Activated CD4-positive, alpha-beta memory T cell treated with anti-CD3 and anti-CD28 coated beads for 36 hours (primary cell): ENCODE measurements at regions of chr1 and their contacts with region 1.

Region 1: DNA sequence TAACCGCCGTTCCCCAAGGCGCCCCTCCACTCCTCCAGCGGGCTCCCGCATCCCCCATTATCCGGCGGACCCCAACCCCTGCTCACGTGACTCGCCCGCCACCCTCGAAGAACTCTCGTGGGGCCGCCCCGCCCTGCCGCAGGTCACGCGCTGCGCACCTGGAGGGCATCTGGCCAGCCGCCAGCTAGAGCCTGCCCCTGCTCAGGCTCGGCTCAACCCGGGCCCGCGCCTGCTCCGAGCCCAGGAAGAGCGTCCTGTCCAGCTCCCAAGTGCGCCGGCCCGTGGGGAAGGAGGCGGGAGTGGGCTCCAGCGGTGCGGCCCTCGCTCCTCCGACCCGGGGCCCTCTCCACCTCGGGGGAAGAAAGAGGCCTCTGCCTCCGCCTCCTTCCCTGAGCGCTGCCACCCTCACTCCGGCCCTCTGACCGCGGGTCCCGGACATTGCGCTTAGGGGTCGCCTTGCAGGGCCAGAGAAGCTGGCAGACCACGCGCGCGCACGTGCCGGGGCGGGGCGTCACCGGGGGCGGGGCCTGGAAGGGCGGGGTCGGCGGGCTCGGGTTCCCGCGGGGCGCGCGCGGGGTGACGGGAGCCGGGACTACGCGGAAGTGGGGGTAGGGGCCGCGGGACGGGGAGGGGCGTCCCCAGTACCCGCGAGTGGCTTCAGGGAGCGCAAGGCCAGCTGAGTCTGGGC is 28.4 kb downstream of the HMGN2 start:
- DNase-seq: peak; percentile 93
- H3K4me3 Mint-ChIP-seq: peak overlapping the region; percentile 88
- H3K27ac Mint-ChIP-seq: peak overlapping the region; percentile 93
- H3K4me1 Mint-ChIP-seq: peaks cover 8% of the 10 kb centered on the region
- H3K27me3 Mint-ChIP-seq: no peaks in the 10 kb centered on the region

Region 2: DNA sequence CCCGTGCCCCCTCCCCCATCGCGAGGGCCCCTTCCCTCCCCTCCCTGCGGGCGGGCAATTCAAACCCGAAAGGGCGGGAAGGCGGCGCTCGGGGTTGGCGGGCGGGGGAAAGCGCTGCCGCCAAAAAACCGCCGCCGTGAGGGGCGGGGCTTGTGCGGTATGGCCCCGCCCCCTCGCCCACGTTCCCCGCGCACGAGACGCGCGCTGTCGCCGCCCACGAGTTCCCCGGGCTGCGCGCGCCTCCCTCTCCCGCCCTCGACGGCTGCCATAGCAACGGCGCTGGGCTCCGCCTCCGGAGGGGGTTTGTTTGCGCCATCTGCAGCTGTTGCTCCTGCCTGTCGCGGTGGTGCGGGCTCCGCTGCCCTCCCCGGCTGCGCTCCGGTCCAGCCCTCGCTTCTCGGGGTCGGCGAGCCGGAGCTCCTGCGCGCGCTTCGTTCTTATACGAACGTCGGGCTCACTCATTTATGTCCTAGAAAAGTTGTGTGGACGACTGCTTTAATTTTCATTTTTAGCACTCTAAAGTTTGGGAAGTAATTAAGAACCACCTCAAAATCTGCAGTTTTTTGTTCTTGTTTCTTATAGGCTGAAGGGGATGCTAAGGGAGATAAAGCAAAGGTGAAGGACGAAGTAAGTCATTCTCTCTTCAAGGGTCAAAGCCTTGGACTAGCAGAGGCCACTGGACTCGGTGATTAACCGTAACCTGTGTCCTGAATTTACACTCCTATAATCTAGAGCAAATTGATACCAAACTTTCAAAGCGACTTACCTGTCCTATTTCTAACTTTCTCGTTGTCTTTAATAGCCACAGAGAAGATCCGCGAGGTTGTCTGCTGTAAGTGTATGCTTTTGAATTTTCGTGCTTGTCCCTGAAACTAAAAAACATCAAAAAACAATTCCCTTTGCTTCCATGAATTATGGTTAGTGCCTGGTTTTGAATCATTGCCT is 27.5 kb before region 1 on chr1:
- CTCF ChIA-PET with region 1: interaction called, 7 read pairs
- POLR2A ChIA-PET with region 1: interaction called, 16 read pairs
- intact Hi-C with region 1: loop called (anchors 1 kb)
- DNase-seq: peak; percentile 97
- H3K4me3 Mint-ChIP-seq: peak overlapping the region; percentile 89
- H3K27ac Mint-ChIP-seq: peak overlapping the region; percentile 74
- H3K4me1 Mint-ChIP-seq: peaks cover 50% of the 10 kb centered on the region
- H3K27me3 Mint-ChIP-seq: no peaks in the 10 kb centered on the region

Region 3: GRCh38 chr1:26524181-26524580 is 23.5 kb after region 1 on chr1:
- CTCF ChIA-PET with region 1: interaction called, 11 read pairs
- POLR2A ChIA-PET with region 1: interaction called, 5 read pairs
- intact Hi-C with region 1: loop called (anchors 1 kb)
- DNase-seq: no peak
- H3K4me3 Mint-ChIP-seq: no peak overlapping the region
- H3K27ac Mint-ChIP-seq: no peak overlapping the region
- H3K4me1 Mint-ChIP-seq: peaks cover 2% of the 10 kb centered on the region
- H3K27me3 Mint-ChIP-seq: no peaks in the 10 kb centered on the region

Region 4: DNA sequence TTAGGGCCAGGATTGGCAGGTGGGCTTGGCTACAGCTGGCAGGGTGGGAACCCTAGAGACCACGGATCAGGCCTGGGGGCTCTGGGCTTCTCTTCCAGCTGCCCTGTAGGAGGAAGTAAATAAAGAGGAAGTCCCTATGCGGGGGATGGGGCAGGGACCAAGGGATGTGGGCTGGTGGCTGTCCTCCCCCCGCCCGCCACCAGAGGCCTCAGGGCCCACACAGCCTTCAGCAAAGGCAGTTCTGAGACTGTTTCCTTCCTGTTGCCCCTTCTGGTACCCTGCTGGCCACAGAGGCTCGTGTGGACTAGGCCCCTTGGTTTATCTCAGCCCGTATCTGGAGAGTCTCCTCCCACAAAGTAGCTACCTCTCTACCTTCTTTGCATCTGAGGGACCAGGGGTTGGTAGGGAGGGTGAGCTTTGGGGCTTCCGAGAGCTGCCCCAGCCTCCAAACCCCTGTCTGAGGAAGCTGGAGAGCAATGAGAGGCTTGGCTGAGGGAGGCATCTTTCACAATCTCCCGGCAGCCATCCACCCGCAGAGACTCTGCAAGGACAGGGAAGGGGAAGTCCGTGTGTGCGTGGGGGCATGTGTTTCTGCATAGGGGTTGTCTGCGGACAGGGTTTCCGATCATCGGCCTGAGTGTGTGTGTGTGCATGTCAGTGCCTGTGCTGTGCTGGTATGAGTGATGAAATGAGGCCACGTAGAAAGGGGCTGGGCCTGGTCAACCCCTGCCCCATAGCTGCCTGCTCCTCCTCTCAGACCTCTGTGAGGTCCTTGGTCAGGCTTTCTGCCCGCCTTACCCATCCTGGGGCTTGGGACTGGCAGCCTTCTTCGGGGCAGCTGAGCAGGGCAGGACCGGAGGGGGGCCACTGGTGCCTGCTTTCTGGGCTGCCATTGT is 41.4 kb after region 1 on chr1:
- CTCF ChIA-PET with region 1: interaction called, 81 read pairs
- POLR2A ChIA-PET with region 1: interaction called, 23 read pairs
- intact Hi-C with region 1: loop called (anchors 1 kb)
- DNase-seq: peak; percentile 94
- H3K4me3 Mint-ChIP-seq: peak overlapping the region; percentile 69
- H3K27ac Mint-ChIP-seq: peak overlapping the region; percentile 98
- H3K4me1 Mint-ChIP-seq: peaks cover 88% of the 10 kb centered on the region
- H3K27me3 Mint-ChIP-seq: no peaks in the 10 kb centered on the region

Region 5: GRCh38 chr1:26582836-26583460 is 82.3 kb after region 1 on chr1:
- CTCF ChIA-PET with region 1: interaction called, 17 read pairs
- POLR2A ChIA-PET with region 1: interaction called, 5 read pairs
- intact Hi-C with region 1: loop called (anchors 2 kb)
- DNase-seq: peak; percentile 94
- H3K4me3 Mint-ChIP-seq: no peak overlapping the region
- H3K27ac Mint-ChIP-seq: peak overlapping the region; percentile 73
- H3K4me1 Mint-ChIP-seq: peaks cover 47% of the 10 kb centered on the region
- H3K27me3 Mint-ChIP-seq: no peaks in the 10 kb centered on the region